ENCODE measurements at regions of chr12 and their contacts with region 1.

Region 1: GRCh38 chr12:120514002-120514401 is 15.0 kb downstream of the COQ5 start:
- DNase-seq: no peak
- ATAC-seq: no peak
- H3K4me3 ChIP-seq: no peak overlapping the region
- H3K27ac ChIP-seq: no peak overlapping the region
- H3K4me1 ChIP-seq: no peaks in the 10 kb centered on the region
- H3K27me3 ChIP-seq: no peaks in the 10 kb centered on the region
- CTCF ChIP-seq: no peak

Region 2: GRCh38 chr12:119850330-119850729 is 663.7 kb before region 1 on chr12:
- intact Hi-C with region 1: loop called in 1 of 2 experiments (anchors 5 kb)
- DNase-seq: no peak
- ATAC-seq: no peak
- H3K4me3 ChIP-seq: no peak overlapping the region
- H3K27ac ChIP-seq: no peak overlapping the region
- H3K4me1 ChIP-seq: no peaks in the 10 kb centered on the region
- H3K27me3 ChIP-seq: no peaks in the 10 kb centered on the region
- CTCF ChIP-seq: no peak

Region 3: DNA sequence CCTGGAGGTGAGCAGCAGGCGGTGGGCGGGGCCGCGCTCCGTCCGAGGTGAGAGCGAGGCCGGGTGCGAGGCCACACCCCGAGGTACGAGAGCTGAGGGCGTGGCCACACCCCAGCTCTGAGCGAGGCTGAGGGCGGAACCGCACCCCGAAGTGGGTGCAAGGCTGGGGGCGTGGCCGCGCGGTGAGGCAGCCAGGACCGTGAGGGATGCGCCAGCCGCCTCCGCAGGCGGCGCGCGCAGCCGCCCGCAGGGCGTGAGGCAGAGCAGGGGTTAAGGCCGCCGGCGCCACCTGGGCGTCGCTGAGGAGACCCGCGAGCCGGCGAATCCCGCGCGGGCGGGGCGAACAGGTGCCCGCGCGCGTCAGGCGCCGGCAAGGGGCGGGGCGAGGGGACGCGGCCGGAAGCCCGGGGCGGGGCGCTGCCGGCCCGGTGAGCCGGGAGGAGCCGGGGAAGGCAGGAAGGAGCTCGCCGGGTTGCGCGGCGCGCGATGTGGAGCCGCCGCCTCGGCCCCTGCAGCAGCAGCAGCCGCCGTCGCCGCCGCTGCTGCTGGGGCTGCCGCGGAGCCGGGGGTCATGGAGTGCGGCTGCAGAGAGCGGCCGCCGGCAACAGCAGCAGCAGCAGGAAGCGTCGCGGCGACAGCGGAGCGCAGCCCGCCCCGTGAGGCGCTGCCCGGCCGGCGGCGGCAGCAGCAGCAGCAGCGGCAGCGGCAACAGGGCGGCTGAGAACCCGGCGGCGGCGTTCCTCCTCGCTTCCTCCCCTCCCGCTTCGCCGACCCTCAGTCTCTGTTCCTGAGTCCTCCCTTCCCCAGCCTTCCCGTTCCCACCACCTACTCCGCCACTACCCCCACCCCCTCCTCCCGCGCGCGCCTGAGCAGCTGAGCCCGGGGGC is 525.0 kb before region 1 on chr12 and contains the start of gene BICDL1:
- intact Hi-C with region 1: no loop called
- DNase-seq: peak; percentile 48 to 66
- ATAC-seq: peak; percentile 52 to 68 (median 66)
- H3K4me3 ChIP-seq: peak within 1 kb of the TSS; percentile 65
- H3K27ac ChIP-seq: no peak within 1 kb of the TSS
- H3K4me1 ChIP-seq: no peaks in the 10 kb centered on the region
- H3K27me3 ChIP-seq: peaks cover 0 to 83% (median 5%) of the 10 kb centered on the region in 3 donors
- CTCF ChIP-seq: no peak
- total RNA-seq, gene BICDL1: 0.09 to 0.22 (median 0.15) TPM in 3 of 4 donors, not detected in the other

Region 4: GRCh38 chr12:120361506-120362208 is 152.3 kb before region 1 on chr12:
- intact Hi-C with region 1: no loop called
- DNase-seq: peak; percentile 53 to 68
- ATAC-seq: peak in 3 of 4 donors; percentile 23 to 50 (median 37)
- H3K4me3 ChIP-seq: peak overlapping the region; percentile 53
- H3K27ac ChIP-seq: no peak overlapping the region
- H3K4me1 ChIP-seq: no peaks in the 10 kb centered on the region
- H3K27me3 ChIP-seq: peaks cover 0 to 34% (median 7%) of the 10 kb centered on the region in 3 donors
- CTCF ChIP-seq: no peak